Cardiac septum (tissue), 1 donor: ENCODE measurements at regions of chrX and their contacts with region 1.

Region 1: DNA sequence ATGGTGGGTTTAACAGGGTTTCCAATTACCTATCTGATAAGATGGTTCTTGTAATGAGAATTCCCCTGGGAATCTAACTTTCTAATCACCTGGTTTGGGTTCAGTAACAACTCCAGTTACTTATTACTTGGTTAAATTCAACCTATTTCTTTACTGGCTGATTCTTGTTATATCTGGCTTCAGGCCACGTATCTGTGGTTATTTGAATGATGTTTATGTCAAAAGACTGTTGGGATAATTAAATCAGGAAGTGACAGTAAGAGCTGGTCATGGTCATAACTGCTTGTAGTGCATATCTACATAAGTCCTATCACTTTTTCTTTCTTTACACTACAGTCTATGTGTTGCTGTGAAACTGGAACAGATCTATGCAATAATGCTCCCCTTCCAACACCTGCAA is 108.1 kb downstream of the MID1 start:
- DNase-seq: no peak

Region 2: DNA sequence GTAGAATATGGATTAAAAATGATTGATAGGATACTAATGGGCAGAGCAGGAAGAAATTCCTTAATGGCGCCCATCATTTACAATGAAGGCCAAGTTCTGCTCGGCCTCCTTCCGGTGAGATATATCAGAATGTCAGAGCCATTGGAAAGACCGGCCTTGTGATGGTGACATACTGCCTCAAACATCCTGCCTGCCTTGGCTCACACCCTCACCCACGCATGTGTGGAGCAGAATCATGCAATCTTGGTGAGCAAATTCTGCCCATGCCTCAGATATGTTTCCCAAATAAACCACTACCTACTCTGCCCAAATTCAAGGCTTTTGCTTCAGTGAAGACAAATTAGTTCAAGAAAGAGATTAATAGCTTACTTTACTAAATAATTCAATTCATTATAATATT is 55.2 kb before region 1 on chrX:
- intact Hi-C with region 1: loop called (anchors 2 kb)
- DNase-seq: no peak